ENCODE measurements at regions of chr10 and their contacts with region 1.

Region 1: GRCh38 chr10:71812016-71812912 is 38.8 kb downstream of the PSAP start:
- DNase-seq: peak; percentile 82
- ATAC-seq: peak; percentile 96
- H3K4me3 Mint-ChIP-seq: no peak overlapping the region
- H3K27ac Mint-ChIP-seq: no peak overlapping the region
- H3K4me1 Mint-ChIP-seq: peaks cover 5% of the 10 kb centered on the region
- H3K27me3 Mint-ChIP-seq: no peaks in the 10 kb centered on the region

Region 2: DNA sequence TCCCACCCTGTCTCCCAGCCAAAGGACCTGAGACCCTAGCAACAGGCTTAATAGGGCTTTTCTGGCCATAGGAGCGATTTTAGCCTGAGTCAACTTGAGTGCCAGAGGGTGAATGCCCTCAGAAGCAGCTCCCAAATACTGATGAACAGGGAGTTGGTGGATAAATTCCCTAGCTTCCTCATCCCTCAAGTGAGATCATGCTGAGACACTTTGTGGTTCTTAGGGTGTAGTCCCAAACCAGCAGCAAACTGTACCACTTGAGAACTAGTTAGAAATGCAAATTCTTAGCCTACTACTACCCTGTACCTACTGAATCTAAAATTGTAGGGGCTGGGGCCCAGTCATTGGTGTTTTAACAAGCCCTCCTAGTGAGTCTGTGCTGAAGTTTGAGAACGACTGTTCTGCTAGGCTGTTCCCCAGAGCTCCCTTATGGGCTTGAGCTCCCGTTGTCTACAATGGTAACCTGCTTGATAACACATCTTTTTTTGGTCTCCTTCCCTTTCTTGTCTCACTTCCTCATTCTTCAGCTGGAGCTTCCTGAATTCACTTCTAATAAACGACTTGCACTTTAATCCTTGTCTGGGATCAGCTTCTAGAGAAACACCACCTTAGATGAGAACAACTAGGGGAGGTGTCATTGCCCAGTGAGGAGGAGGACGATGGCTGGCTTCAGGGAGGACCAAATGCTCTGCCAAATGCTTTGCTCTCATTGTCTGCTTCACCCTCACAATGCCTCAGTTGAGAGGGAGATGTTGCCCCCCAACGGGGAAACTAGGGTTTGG is 433.7 kb before region 1 on chr10:
- CTCF ChIA-PET with region 1: interaction called, 10 read pairs
- DNase-seq: no peak
- ATAC-seq: no peak
- H3K4me3 Mint-ChIP-seq: peak overlapping the region; percentile 3
- H3K27ac Mint-ChIP-seq: no peak overlapping the region
- H3K4me1 Mint-ChIP-seq: peaks cover 15% of the 10 kb centered on the region
- H3K27me3 Mint-ChIP-seq: peaks cover 3% of the 10 kb centered on the region

Region 3: DNA sequence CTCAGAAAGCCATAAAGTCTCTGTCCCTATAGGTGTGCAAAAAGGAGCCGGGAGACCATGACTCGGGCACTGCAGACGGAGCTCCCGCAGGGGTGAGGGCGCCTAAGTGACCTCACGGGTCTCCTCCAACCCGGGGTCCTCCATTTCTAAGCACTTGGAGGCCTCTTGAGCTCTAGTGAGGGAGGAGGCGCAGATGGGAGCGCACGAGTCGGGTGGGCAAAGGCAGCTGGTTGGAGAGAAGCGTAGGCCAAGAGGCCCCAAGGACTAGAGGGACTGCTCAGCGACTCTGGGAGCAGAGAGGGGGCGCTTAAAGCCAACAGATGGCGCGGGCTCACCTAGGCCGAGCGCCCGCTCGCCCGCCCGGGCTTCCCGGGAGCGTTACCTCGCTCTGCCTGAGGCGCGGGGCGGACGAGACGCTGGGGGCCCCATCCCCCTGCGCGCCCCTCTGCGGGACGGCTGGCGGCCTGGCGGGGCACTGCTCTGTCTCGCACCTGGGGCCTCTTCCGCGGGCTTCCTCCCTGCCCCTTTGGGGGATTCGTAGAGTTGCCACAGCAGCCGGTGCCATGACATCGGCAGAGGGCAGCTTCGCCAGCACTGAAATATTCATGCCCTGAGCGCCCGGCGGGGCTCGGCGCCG is 416.1 kb before region 1 on chr10:
- CTCF ChIA-PET with region 1: no interaction called
- DNase-seq: peak; percentile 43
- ATAC-seq: peak; percentile 68
- H3K4me3 Mint-ChIP-seq: no peak overlapping the region
- H3K27ac Mint-ChIP-seq: no peak overlapping the region
- H3K4me1 Mint-ChIP-seq: no peaks in the 10 kb centered on the region
- H3K27me3 Mint-ChIP-seq: peaks cover 58% of the 10 kb centered on the region

Region 4: GRCh38 chr10:71713135-71714030 is 98.9 kb before region 1 on chr10:
- CTCF ChIA-PET with region 1: interaction called, 26 read pairs
- DNase-seq: peak; percentile 63
- ATAC-seq: peak; percentile 79
- H3K4me3 Mint-ChIP-seq: peak overlapping the region; percentile 60
- H3K27ac Mint-ChIP-seq: peak overlapping the region; percentile 98
- H3K4me1 Mint-ChIP-seq: peaks cover 36% of the 10 kb centered on the region
- H3K27me3 Mint-ChIP-seq: no peaks in the 10 kb centered on the region

Region 5: GRCh38 chr10:71788954-71789353 is 23.3 kb before region 1 on chr10:
- CTCF ChIA-PET with region 1: no interaction called
- DNase-seq: no peak
- ATAC-seq: no peak
- H3K4me3 Mint-ChIP-seq: no peak overlapping the region
- H3K27ac Mint-ChIP-seq: no peak overlapping the region
- H3K4me1 Mint-ChIP-seq: peaks cover 12% of the 10 kb centered on the region
- H3K27me3 Mint-ChIP-seq: no peaks in the 10 kb centered on the region

Region 6: GRCh38 chr10:71888623-71889387 is 76.5 kb after region 1 on chr10:
- CTCF ChIA-PET with region 1: no interaction called
- DNase-seq: peak; percentile 68
- ATAC-seq: peak; percentile 94
- H3K4me3 Mint-ChIP-seq: peak overlapping the region; percentile 66
- H3K27ac Mint-ChIP-seq: no peak overlapping the region
- H3K4me1 Mint-ChIP-seq: peaks cover 11% of the 10 kb centered on the region
- H3K27me3 Mint-ChIP-seq: peaks cover 34% of the 10 kb centered on the region

Region 7: DNA sequence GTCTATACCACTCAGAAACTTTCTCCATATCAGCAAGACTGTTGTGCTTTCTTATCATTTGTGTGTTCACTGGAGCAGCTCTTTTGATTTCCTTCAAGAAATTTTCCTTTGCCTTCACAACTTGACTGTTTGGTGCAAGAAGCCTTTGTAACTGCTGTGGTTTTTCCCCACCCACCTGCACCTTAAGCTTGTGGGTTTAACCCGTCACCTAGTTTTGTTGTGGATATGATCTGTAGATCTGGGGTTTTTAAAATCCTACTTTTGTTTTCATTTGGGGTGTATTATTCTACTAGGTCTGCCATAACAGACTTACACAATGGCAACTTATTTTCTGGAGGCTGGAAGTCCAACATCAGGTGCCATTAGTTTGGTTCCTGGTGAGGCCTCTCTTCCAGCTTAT is 121.4 kb after region 1 on chr10:
- CTCF ChIA-PET with region 1: no interaction called
- DNase-seq: no peak
- ATAC-seq: no peak
- H3K4me3 Mint-ChIP-seq: no peak overlapping the region
- H3K27ac Mint-ChIP-seq: no peak overlapping the region
- H3K4me1 Mint-ChIP-seq: peaks cover 10% of the 10 kb centered on the region
- H3K27me3 Mint-ChIP-seq: peaks cover 51% of the 10 kb centered on the region